Activated CD4-positive, alpha-beta T cell treated with anti-CD3 and anti-CD28 coated beads for 36 hours (primary cell): ENCODE measurements at regions of chr19 and their contacts with region 1.

Region 1: GRCh38 chr19:49640113-49640898 is at the start of gene RRAS:
- DNase-seq: peak; percentile 100
- ATAC-seq: peak; percentile 76
- H3K4me3 Mint-ChIP-seq: peak within 1 kb of the TSS; percentile 100
- H3K27ac Mint-ChIP-seq: peak within 1 kb of the TSS; percentile 100
- H3K4me1 Mint-ChIP-seq: peaks cover 48% of the 10 kb centered on the region
- H3K27me3 Mint-ChIP-seq: no peaks in the 10 kb centered on the region
- total RNA-seq, gene RRAS: 9.7 to 11.7 TPM

Region 2: GRCh38 chr19:48363810-48364563 is 1276.3 kb before region 1 on chr19 and contains the starts of genes SYNGR4 and TMEM143:
- CTCF ChIA-PET with region 1: no interaction called
- POLR2A ChIA-PET with region 1: interaction called, 3 read pairs
- intact Hi-C with region 1: loop called in 1 of 2 experiments (anchors 5 kb)
- DNase-seq: peak; percentile 99
- ATAC-seq: peak; percentile 90
- H3K4me3 Mint-ChIP-seq: peak within 1 kb of the TSS; percentile 84
- H3K27ac Mint-ChIP-seq: peak within 1 kb of the TSS; percentile 95
- H3K4me1 Mint-ChIP-seq: peaks cover 13% of the 10 kb centered on the region
- H3K27me3 Mint-ChIP-seq: no peaks in the 10 kb centered on the region
- total RNA-seq, gene SYNGR4: 0.25 TPM in 1 of 2 experiments, not detected in the other
- total RNA-seq, gene TMEM143: 18.9 to 21.5 TPM

Region 3: GRCh38 chr19:48872182-48872883 is 768.0 kb before region 1 on chr19 and contains the start of gene PPP1R15A:
- CTCF ChIA-PET with region 1: no interaction called
- POLR2A ChIA-PET with region 1: no interaction called
- intact Hi-C with region 1: loop called in 1 of 2 experiments (anchors 10 kb)
- DNase-seq: peak; percentile 99
- ATAC-seq: peak; percentile 50
- H3K4me3 Mint-ChIP-seq: peak within 1 kb of the TSS; percentile 98
- H3K27ac Mint-ChIP-seq: peak within 1 kb of the TSS; percentile 99
- H3K4me1 Mint-ChIP-seq: peaks cover 41% of the 10 kb centered on the region
- H3K27me3 Mint-ChIP-seq: no peaks in the 10 kb centered on the region
- total RNA-seq, gene PPP1R15A: 51.6 to 62.4 TPM

Region 4: GRCh38 chr19:49497047-49497788 is 143.1 kb before region 1 on chr19:
- CTCF ChIA-PET with region 1: interaction called, 5 read pairs
- POLR2A ChIA-PET with region 1: interaction called, 8 read pairs
- intact Hi-C with region 1: loop called (anchors 1 kb)
- DNase-seq: peak; percentile 86
- ATAC-seq: peak; percentile 5
- H3K4me3 Mint-ChIP-seq: peak overlapping the region; percentile 93
- H3K27ac Mint-ChIP-seq: peak overlapping the region; percentile 98
- H3K4me1 Mint-ChIP-seq: peaks cover 47% of the 10 kb centered on the region
- H3K27me3 Mint-ChIP-seq: no peaks in the 10 kb centered on the region

Region 5: GRCh38 chr19:49599378-49600295 is 40.7 kb before region 1 on chr19:
- CTCF ChIA-PET with region 1: no interaction called
- POLR2A ChIA-PET with region 1: no interaction called
- intact Hi-C with region 1: no loop called
- DNase-seq: no peak
- ATAC-seq: peak; percentile 12
- H3K4me3 Mint-ChIP-seq: no peak overlapping the region
- H3K27ac Mint-ChIP-seq: peak overlapping the region; percentile 58
- H3K4me1 Mint-ChIP-seq: peaks cover 12% of the 10 kb centered on the region
- H3K27me3 Mint-ChIP-seq: no peaks in the 10 kb centered on the region

Region 6: DNA sequence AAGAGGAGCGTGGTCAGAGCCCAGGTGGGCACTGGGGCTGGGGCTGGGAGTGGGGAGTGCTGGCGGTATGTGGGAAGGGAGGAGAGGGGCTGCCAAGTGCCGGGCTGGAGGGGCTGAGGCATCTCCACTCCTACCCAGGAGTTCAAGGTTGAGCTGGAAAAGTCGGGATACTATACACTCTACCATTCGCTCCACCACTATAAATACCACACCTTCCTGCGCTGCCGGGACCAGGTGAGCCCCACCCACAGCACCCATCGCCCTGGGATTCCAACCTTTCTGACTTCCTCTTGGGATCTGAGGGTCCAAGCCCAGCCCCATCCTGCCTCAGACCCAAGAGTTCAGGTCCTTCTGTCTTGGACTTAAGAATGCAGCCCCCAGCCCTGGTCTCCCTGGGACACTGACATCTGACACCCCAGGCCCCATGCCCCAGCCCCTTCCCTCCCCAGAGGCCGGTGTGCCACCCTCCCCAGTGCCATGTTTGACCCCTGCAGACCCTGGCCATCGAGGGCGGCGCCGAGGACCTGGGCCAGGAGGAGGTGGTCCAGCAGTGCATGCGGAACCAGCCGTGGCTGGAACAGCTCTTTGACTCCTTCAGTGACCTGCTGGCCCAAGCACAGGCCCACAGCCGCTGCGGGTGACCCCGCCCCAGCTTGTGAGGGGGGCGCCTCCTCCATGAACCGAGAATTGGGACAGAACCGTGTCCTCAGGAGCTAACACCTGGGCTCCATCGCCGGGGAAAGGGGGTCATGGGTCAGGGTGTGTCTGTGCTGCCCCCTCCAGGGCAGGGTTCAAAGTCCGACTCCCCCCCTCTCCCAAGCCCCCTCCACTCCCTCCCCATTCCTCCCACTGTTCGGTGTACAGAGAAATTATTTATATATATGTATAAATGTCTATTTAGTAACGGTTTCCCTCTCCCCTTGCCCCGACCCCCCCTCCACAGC is 15.1 kb before region 1 on chr19:
- CTCF ChIA-PET with region 1: no interaction called
- POLR2A ChIA-PET with region 1: no interaction called
- intact Hi-C with region 1: no loop called
- DNase-seq: no peak
- ATAC-seq: no peak
- H3K4me3 Mint-ChIP-seq: no peak overlapping the region
- H3K27ac Mint-ChIP-seq: no peak overlapping the region
- H3K4me1 Mint-ChIP-seq: no peaks in the 10 kb centered on the region
- H3K27me3 Mint-ChIP-seq: no peaks in the 10 kb centered on the region

Region 7: DNA sequence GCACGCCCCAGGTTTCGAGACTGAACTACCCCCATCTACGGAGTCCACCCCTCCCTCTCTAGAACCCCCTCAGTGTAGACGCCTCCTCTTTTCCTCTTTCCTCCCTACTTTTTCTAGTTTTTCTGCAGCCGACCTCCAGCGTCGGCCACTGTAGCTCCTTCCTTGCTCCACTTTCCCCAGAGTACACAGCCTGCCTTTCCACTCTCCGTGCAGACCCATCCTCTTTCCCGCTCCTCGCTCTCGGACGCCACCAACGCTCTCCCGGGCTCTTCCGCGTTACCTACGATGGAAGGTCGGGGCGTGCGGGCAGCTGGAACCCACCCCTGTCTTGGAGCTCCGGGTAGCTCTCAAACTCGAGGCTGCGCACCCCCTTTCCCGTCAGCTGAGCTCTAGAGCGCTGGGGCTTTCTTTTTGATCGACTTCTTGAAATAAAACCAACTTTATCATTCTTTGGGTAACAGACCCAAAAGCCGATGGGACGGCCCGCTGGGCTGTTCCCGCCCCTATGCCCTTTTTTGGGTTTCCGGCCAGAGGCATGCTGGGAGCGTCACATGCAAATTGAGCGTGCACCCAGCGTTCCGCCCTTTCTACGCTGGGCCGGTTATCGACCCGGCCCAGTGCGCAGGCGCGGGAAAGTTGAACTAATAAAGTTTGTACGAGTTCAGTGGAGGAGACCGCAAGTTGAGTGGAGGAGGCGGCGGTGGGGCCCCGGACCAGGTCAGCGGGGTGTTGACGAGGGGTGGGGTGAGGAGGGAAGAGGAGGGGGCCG is 25.2 kb after region 1 on chr19 and contains the starts of genes BCL2L12 and IRF3:
- CTCF ChIA-PET with region 1: interaction called, 62 read pairs
- POLR2A ChIA-PET with region 1: interaction called, 15 read pairs
- intact Hi-C with region 1: loop called (anchors 1 kb)
- DNase-seq: peak; percentile 100
- ATAC-seq: peak; percentile 86
- H3K4me3 Mint-ChIP-seq: peak within 1 kb of the TSS; percentile 96
- H3K27ac Mint-ChIP-seq: peak within 1 kb of the TSS; percentile 92
- H3K4me1 Mint-ChIP-seq: peaks cover 29% of the 10 kb centered on the region
- H3K27me3 Mint-ChIP-seq: no peaks in the 10 kb centered on the region
- total RNA-seq, gene BCL2L12: 79.6 to 93.8 TPM
- total RNA-seq, gene IRF3: 123 to 125 TPM

Region 8: GRCh38 chr19:49850473-49851342 is 210.4 kb after region 1 on chr19 and contains the start of gene PTOV1:
- CTCF ChIA-PET with region 1: no interaction called
- POLR2A ChIA-PET with region 1: no interaction called
- intact Hi-C with region 1: loop called in 1 of 2 experiments (anchors 1 kb)
- DNase-seq: peak; percentile 95
- ATAC-seq: peak; percentile 91
- H3K4me3 Mint-ChIP-seq: peak within 1 kb of the TSS; percentile 85
- H3K27ac Mint-ChIP-seq: peak within 1 kb of the TSS; percentile 91
- H3K4me1 Mint-ChIP-seq: peaks cover 36% of the 10 kb centered on the region
- H3K27me3 Mint-ChIP-seq: no peaks in the 10 kb centered on the region
- total RNA-seq, gene PTOV1: 76.9 to 104 TPM

Region 9: DNA sequence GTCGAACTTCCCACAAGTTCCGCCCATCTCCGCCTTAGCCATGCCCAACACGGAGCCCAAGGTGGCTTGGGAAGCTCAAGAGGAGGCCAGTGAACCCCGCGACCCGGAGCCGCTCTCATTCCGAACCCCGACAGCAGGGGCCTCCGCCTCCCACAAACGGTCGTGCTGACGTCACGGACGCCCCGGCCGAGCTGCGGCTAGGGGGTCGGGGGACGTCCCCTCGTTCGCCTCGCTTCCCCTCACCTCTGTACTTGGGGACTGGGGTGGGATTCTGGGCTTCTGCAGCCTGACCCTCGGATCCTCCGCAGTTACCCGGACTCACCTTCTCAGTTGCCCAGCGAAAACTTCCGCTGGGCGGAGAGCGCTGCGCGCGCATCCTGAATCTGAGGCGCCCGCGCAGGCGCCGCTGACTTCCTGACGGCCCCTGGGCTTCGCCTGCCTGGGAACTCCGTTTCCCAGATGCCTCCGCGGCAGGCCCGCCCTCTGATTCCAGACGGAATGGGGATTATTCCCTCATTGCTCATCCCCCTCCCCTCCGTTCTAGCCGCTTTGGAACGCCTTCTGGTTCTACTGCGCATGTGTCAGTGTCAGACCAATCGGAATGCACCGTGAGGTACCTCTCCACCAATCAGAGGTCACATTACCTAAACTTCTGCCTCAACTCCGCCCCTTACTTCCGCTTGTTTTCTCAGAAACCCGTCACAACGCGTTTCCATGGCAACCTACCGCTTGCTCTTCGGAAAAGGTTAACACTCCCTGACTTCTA is 384.9 kb after region 1 on chr19 and contains the start of gene VRK3:
- CTCF ChIA-PET with region 1: no interaction called
- POLR2A ChIA-PET with region 1: interaction called, 3 read pairs
- intact Hi-C with region 1: loop called in 1 of 2 experiments (anchors 1 kb)
- DNase-seq: peak; percentile 98
- ATAC-seq: peak; percentile 91
- H3K4me3 Mint-ChIP-seq: peak within 1 kb of the TSS; percentile 85
- H3K27ac Mint-ChIP-seq: peak within 1 kb of the TSS; percentile 95
- H3K4me1 Mint-ChIP-seq: peaks cover 44% of the 10 kb centered on the region
- H3K27me3 Mint-ChIP-seq: no peaks in the 10 kb centered on the region
- total RNA-seq, gene VRK3: 52.4 to 61.2 TPM